CD14-positive monocyte (primary cell): ENCODE measurements at regions of chr18 and their contacts with region 1.

Region 1: GRCh38 chr18:21928925-21929324 is 188.3 kb downstream of the MIB1 start:
- DNase-seq: no peak
- H3K4me3 ChIP-seq: no peak overlapping the region
- H3K4me3 Mint-ChIP-seq: no peak overlapping the region
- H3K27ac ChIP-seq: no peak overlapping the region
- H3K27ac Mint-ChIP-seq: peak overlapping the region in 1 of 7 donors; percentile 61
- H3K4me1 ChIP-seq: no peaks in the 10 kb centered on the region
- H3K4me1 Mint-ChIP-seq: no peaks in the 10 kb centered on the region
- H3K27me3 ChIP-seq: no peaks in the 10 kb centered on the region
- H3K27me3 Mint-ChIP-seq: peaks cover 5 to 12% (median 9%) of the 10 kb centered on the region in 3 donors
- CTCF ChIP-seq: no peak

Region 2: GRCh38 chr18:21857871-21858270 is 71.1 kb before region 1 on chr18:
- intact Hi-C with region 1: no loop called
- DNase-seq: no peak
- H3K4me3 ChIP-seq: no peak overlapping the region
- H3K4me3 Mint-ChIP-seq: no peak overlapping the region
- H3K27ac ChIP-seq: peak overlapping the region in 1 of 2 donors; percentile 29
- H3K27ac Mint-ChIP-seq: no peak overlapping the region
- H3K4me1 ChIP-seq: peaks cover 2 to 6% of the 10 kb centered on the region in 2 donors
- H3K4me1 Mint-ChIP-seq: peaks cover 12% of the 10 kb centered on the region
- H3K27me3 ChIP-seq: no peaks in the 10 kb centered on the region
- H3K27me3 Mint-ChIP-seq: no peaks in the 10 kb centered on the region
- CTCF ChIP-seq: no peak

Region 3: GRCh38 chr18:21991081-21991581 is 62.2 kb after region 1 on chr18:
- intact Hi-C with region 1: no loop called
- DNase-seq: no peak
- H3K4me3 ChIP-seq: no peak overlapping the region
- H3K4me3 Mint-ChIP-seq: no peak overlapping the region
- H3K27ac ChIP-seq: no peak overlapping the region
- H3K27ac Mint-ChIP-seq: no peak overlapping the region
- H3K4me1 ChIP-seq: no peaks in the 10 kb centered on the region
- H3K4me1 Mint-ChIP-seq: no peaks in the 10 kb centered on the region
- H3K27me3 ChIP-seq: no peaks in the 10 kb centered on the region
- H3K27me3 Mint-ChIP-seq: peaks cover 5 to 8% (median 6%) of the 10 kb centered on the region in 3 donors
- CTCF ChIP-seq: no peak

Region 4: DNA sequence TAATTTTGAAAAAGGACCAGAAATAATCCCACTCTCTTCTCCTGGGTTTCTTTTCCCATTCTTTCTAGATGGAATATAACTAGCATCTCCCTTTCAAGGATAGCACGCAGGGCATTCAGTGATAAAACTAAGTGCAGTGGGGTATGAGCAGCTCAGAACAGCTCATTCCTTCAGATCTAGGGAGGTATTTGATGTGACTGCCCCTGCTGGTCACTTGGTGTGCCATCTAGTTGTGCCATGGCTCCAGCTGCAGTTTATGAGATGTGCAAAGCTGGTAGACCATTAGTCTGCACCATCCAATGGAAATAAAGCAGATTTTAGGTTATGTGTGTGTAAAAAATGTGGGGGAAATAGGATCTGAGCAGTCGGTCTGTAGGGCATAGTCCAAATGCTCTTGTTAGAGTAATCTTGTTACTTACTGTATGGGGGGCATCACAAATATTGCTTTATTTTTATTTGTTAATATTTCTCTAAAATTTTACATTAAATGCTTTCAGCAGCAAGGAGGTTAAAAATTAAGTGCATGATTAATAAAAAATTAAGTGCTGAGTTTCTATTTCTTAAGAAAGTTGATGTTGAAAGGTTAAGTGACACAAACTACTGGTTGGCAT is 449.9 kb after region 1 on chr18:
- intact Hi-C with region 1: loop called in 1 of 2 experiments (anchors 10 kb)
- DNase-seq: peak in 2 of 3 donors; percentile 7 to 10
- H3K4me3 ChIP-seq: no peak overlapping the region
- H3K4me3 Mint-ChIP-seq: no peak overlapping the region
- H3K27ac ChIP-seq: no peak overlapping the region
- H3K27ac Mint-ChIP-seq: no peak overlapping the region
- H3K4me1 ChIP-seq: no peaks in the 10 kb centered on the region
- H3K4me1 Mint-ChIP-seq: no peaks in the 10 kb centered on the region
- H3K27me3 ChIP-seq: no peaks in the 10 kb centered on the region
- H3K27me3 Mint-ChIP-seq: peaks cover 2 to 4% (median 3%) of the 10 kb centered on the region in 3 donors
- CTCF ChIP-seq: peak; percentile 32